ENCODE measurements at regions of chr2 and their contacts with region 1.

Region 1: DNA sequence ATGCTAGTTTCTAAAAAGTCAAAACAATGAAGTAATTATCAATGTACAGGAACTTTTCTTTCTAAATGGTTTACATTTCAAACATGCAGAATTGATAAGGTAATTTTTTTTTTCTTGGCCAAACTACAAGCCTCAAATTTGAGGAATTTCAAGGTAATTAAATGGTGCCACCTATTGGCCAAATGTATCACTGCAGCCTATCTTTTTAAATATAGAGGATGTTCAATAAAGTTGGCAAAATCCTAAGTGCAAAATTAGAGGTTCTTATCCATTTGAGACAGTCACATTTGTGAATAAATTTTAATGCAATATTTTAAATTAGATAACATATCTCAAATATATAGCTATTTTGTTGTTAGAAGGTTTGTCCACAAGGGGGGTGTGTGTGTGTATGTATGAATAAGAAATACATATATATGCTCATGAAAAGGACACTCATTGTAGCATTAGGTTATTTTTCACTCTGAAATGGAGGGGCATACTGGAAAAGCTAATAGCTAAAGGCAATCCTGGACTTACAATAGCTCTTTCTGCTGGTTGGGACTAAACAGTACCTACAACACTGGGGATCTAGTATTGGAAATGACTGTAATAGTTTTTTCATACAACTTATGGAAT is 26.2 kb downstream of the MMADHC start:
- DNase-seq: peak; percentile 23
- H3K4me3 ChIP-seq: peak overlapping the region in 1 of 2 experiments; percentile 50; a peak in 1 of 4 replicates
- H3K27ac ChIP-seq: peak overlapping the region in 1 of 2 experiments; percentile 67; a peak in 1 of 4 replicates
- H3K4me1 ChIP-seq: no peaks in the 10 kb centered on the region; a peak in 1 of 4 replicates
- H3K27me3 ChIP-seq: no peaks in the 10 kb centered on the region
- CTCF ChIP-seq: peak; percentile 98
- EP300 ChIP-seq: no peak
- RAD21 ChIP-seq: peak; percentile 89

Region 2: DNA sequence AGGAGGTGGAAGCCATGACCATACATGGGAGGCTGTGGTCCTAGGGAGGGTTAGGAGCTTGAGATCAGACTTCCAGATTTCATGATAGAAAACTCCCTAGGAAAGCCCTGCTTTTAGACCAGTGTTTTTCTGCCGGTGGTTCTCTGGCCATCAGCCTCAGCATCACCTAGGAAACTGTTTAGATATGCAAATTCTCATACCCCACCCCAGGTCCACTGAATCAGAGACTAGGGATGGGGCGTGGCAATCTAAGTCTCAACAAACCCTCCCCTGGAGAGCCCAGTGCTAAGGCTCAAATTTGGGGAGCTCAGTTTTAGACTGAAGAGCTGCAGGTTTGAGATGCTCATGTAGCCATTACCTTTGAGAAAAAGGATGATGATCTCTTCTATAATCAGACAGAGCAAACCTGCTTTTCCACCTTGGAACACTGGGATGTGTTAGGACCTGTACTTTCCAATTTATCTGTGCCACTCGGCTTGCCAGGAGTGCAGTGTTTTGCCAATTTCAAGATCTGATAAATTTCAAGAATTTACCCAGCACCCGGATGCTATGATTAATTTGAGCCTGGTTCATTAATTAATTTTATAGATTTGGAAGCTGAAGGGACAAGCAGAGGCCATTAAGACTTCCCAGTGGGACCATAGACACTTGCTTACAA is 554.4 kb before region 1 on chr2:
- CTCF ChIA-PET with region 1: interaction called, 10 read pairs
- POLR2A ChIA-PET with region 1: no interaction called
- DNase-seq: peak; percentile 3
- H3K4me3 ChIP-seq: no peak overlapping the region
- H3K27ac ChIP-seq: no peak overlapping the region
- H3K4me1 ChIP-seq: no peaks in the 10 kb centered on the region; a peak in 1 of 4 replicates
- H3K27me3 ChIP-seq: no peaks in the 10 kb centered on the region
- CTCF ChIP-seq: no peak
- EP300 ChIP-seq: no peak
- RAD21 ChIP-seq: no peak

Region 3: DNA sequence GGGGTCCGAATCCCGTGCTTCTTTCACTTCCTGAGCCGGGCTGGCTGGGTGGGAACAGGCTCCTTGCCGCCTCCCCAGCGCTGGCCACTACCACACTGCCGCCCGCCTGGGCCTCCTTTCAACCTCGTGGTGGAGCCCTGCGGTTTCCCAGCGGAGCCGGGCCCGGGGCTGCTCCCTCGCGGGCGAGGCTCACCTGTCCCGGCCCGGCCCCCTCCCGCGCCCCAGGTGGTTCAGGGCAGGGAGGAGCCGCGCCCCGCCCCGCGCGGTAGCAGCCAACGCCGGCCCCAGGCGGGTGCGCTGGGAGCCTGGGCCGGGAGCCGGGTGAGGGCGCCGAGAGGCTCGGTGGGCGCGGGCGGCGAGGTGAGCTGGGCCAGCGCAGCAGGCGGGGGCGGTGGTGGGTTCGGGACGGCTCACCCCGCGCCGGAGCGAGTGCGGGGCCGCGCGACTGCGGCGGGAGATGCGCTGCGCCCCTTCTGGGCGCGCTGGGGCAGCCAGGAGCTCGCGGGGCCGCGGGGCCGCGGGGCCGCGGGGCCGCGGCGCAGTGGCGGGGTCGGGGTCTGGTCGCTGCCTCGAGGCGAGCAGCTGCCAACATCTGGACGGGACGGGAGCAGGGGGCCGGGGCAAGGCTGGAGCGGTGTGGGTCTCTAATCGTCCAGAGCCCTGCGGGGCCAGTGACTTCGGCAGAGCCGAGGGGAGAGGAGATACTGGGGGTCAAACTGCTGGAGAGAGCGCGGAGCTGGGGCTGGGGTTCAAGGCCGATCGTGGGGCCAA is 522.8 kb before region 1 on chr2 and contains the start of gene LYPD6B:
- CTCF ChIA-PET with region 1: interaction called, 18 read pairs
- POLR2A ChIA-PET with region 1: no interaction called
- DNase-seq: peak; percentile 87
- H3K4me3 ChIP-seq: peak within 1 kb of the TSS; percentile 58 to 63
- H3K27ac ChIP-seq: no peak within 1 kb of the TSS
- H3K4me1 ChIP-seq: peaks cover 0 to 7% of the 10 kb centered on the region in 2 experiments; a peak in 1 of 4 replicates
- H3K27me3 ChIP-seq: no peaks in the 10 kb centered on the region
- CTCF ChIP-seq: peak; percentile 13; the same call in 1 of the 2 replicates
- EP300 ChIP-seq: no peak
- RAD21 ChIP-seq: peak; percentile 16
- polyA plus RNA-seq, gene LYPD6B: 17.0 and 18.2 TPM in 2 replicates

Region 4: DNA sequence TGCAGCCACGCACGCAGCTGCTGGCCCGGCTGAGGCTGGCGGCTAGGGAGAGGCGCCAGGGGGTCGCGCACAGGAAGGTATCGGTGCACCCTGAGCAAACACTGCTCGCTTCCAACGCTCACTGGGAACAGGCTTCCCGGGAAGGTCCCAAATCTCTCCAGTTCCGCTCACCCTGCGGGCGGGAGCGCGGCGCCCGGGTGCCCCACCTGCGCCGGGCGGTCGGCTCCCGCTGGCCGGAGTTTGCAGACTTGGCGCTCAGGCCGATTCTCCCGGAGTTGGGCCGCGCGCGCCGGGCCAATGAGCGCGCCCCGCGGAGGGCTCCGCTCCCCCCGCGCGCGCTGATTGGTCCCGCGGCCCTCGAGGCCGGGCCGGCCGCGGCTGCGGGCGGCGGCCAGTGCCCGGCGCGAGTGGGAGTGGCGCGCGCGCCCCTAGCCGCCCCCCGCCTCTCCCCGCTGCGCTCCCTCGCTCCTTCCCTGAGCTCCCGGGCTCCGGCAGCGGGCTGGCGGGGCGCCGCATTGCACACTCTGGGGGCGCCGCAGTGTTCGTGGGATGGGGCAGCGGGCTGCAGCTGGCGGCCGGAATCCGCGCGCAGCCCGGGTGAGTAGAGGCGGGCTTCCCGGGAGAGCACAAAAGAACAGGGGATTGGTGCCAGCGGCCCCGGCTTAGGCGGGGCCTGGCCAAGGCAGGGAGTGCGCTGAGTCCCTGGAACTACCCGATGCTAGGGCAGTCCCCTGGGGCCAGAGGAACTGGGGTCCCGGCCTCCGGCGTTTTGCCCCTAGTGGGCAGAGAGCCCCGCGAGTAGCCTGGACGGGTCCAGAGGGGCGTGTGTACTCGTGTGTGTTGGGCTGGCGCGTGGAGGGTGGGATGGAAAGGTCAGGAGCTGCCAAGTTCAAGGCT is 231.0 kb before region 1 on chr2 and contains the start of gene LYPD6:
- CTCF ChIA-PET with region 1: interaction called, 37 read pairs
- POLR2A ChIA-PET with region 1: no interaction called
- DNase-seq: peak; percentile 96
- H3K4me3 ChIP-seq: peak within 1 kb of the TSS; percentile 94 to 97
- H3K27ac ChIP-seq: peak within 1 kb of the TSS; percentile 61 to 79; a peak in 3 of 4 replicates
- H3K4me1 ChIP-seq: peaks cover 0 to 10% of the 10 kb centered on the region in 2 experiments; a peak in 2 of 4 replicates
- H3K27me3 ChIP-seq: no peaks in the 10 kb centered on the region
- CTCF ChIP-seq: peak; percentile 32
- EP300 ChIP-seq: no peak
- RAD21 ChIP-seq: no peak
- polyA plus RNA-seq, gene LYPD6: 8.1 and 11.0 TPM in 2 replicates

Region 5: DNA sequence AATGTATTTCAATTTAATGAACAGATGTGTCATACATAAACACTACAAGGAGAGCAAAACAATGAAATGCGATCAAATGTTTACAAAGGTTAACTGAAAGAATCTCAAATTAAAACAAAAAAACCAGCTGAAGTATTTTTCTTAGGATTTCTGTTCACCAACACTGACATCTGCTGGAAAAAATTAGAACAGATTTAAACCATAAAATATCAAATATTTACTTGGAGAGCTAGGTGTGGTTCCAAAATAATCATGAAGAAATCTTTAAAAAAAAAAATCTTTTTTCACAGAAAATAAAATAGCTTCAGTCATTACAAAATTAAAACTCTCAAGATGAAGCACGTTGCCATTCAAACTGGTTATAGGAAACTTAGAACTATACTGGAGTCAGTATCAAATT is 12.3 kb after region 1 on chr2:
- CTCF ChIA-PET with region 1: interaction called, 19 read pairs
- POLR2A ChIA-PET with region 1: no interaction called
- DNase-seq: no peak
- H3K4me3 ChIP-seq: no peak overlapping the region
- H3K27ac ChIP-seq: no peak overlapping the region
- H3K4me1 ChIP-seq: no peaks in the 10 kb centered on the region
- H3K27me3 ChIP-seq: no peaks in the 10 kb centered on the region
- CTCF ChIP-seq: peak; percentile 64
- EP300 ChIP-seq: no peak
- RAD21 ChIP-seq: peak; percentile 40; the same call in 1 of the 2 replicates

Region 6: GRCh38 chr2:149648282-149649030 is 87.0 kb after region 1 on chr2:
- CTCF ChIA-PET with region 1: no interaction called
- POLR2A ChIA-PET with region 1: no interaction called
- DNase-seq: no peak
- H3K4me3 ChIP-seq: peak overlapping the region in 1 of 2 experiments; percentile 18; a peak in 1 of 4 replicates
- H3K27ac ChIP-seq: peak overlapping the region; percentile 83 to 94
- H3K4me1 ChIP-seq: peaks cover 0 to 19% of the 10 kb centered on the region in 2 experiments; a peak in 1 of 4 replicates
- H3K27me3 ChIP-seq: no peaks in the 10 kb centered on the region
- CTCF ChIP-seq: peak; percentile 20; the same call in 1 of the 2 replicates
- EP300 ChIP-seq: peak; percentile 59 to 74
- RAD21 ChIP-seq: no peak

Region 7: DNA sequence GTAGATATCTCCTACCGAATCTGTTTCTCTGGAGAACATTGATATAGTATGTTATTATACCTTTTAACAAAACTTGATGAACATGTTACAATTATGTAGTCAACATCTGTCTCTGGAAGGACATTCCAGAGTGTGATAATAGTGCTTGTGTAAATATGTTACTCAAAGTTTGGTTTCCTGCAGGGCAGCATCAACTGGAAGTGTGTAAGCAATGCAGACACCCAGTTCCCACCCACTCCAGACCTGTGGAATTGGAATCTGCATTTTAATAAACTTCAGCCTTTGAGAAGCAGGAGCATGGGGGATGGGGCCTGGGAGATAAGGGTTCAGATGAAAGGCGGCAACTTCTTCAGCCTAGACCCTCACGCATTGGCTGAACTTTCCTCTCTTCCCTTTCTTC is 527.1 kb after region 1 on chr2:
- CTCF ChIA-PET with region 1: no interaction called
- POLR2A ChIA-PET with region 1: no interaction called
- DNase-seq: no peak
- H3K4me3 ChIP-seq: no peak overlapping the region
- H3K27ac ChIP-seq: no peak overlapping the region
- H3K4me1 ChIP-seq: no peaks in the 10 kb centered on the region
- H3K27me3 ChIP-seq: no peaks in the 10 kb centered on the region
- CTCF ChIP-seq: no peak
- EP300 ChIP-seq: no peak
- RAD21 ChIP-seq: no peak

Region 8: GRCh38 chr2:150125708-150126107 is 564.3 kb after region 1 on chr2:
- CTCF ChIA-PET with region 1: no interaction called
- POLR2A ChIA-PET with region 1: no interaction called
- DNase-seq: no peak
- H3K4me3 ChIP-seq: no peak overlapping the region
- H3K27ac ChIP-seq: peak overlapping the region; percentile 22 to 67; a peak in 3 of 4 replicates
- H3K4me1 ChIP-seq: peaks cover 9 to 17% of the 10 kb centered on the region in 2 experiments; a peak in 3 of 4 replicates
- H3K27me3 ChIP-seq: no peaks in the 10 kb centered on the region
- CTCF ChIP-seq: peak; percentile 30; the same call in 1 of the 2 replicates
- EP300 ChIP-seq: no peak
- RAD21 ChIP-seq: no peak